Heart left ventricle (tissue), 16 donors: ENCODE measurements at regions of chr2 and their contacts with region 1.

Region 1: DNA sequence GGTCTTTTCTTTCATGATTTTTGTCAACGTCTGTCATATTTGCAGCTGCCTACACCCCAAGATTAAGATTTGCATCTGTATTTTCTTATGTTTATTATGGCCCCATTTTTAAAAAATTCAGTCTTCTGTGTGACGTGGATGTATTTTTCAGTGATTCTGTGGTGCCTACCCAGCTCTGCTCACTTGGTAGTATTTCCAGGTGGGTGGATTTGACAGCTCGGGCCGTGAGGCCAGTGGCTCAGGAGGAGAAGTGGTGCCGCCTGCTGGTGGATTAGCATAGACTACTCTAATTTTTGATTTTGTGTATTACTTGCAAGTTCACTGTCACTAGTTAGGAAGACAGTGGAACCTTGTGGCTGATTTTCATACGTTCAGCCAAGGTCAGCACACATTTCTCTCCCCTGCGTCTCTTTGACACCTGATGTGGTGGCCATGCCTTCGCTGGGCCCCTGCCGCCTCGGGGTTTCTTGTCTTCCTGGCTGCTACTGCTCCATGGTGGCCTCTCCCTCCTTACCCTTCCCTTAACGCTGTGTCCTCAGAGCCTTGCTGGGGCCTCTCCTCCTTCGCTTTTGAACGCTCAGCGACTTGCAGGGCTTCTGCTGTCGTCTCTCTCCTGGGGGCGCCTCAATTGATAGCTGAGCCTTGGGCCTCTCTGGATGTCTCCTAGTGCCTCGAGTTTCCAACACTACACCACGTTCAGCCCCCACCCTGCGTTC is 89.3 kb downstream of the DGKD start:
- DNase-seq: peak; percentile 74 to 85 (median 80)
- ATAC-seq: peak; percentile 33 to 70 (median 53)
- H3K4me3 ChIP-seq: no peak overlapping the region
- H3K27ac ChIP-seq: peak overlapping the region in 1 of 12 donors; percentile 30
- H3K4me1 ChIP-seq: peaks cover 0 to 33% (median 14%) of the 10 kb centered on the region in 12 donors
- H3K27me3 ChIP-seq: no peaks in the 10 kb centered on the region
- CTCF ChIP-seq: peak; percentile 66 to 92 (median 82)
- POLR2A ChIP-seq: no peak

Region 2: DNA sequence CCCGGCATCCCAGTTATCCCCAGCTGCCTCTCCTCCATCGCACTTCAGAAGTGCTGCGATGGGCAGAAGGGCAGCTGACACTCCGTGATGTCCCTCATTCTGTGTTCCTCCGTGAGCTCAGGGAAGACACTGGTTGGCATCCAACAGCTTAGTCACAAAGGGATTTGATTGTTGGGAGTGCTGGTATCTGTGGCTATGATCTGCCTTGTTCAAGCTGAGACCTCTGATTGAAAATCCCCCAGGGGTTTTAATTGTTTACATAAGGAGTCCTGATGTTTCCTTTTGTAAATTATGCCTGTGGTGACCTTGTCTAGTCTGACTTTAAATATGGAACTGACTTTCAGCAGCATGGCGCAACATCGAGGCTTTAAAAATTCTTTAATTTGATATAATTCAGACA is 154.9 kb before region 1 on chr2:
- intact Hi-C with region 1: loop called in 6 of 10 experiments (anchors 10 kb)
- DNase-seq: no peak
- ATAC-seq: no peak
- H3K4me3 ChIP-seq: no peak overlapping the region
- H3K27ac ChIP-seq: no peak overlapping the region
- H3K4me1 ChIP-seq: peaks cover 0 to 6% (median 0%) of the 10 kb centered on the region in 12 donors
- H3K27me3 ChIP-seq: no peaks in the 10 kb centered on the region
- CTCF ChIP-seq: no peak
- POLR2A ChIP-seq: no peak

Region 3: GRCh38 chr2:233353769-233354499 is 89.7 kb before region 1 on chr2 and contains the start of gene DGKD:
- intact Hi-C with region 1: loop called (anchors 1 to 5 kb)
- DNase-seq: peak; percentile 42 to 85 (median 66)
- ATAC-seq: peak; percentile 34 to 84 (median 73)
- H3K4me3 ChIP-seq: peak within 1 kb of the TSS; percentile 39 to 90 (median 70)
- H3K27ac ChIP-seq: peak within 1 kb of the TSS in 8 of 12 donors; percentile 39 to 81 (median 62)
- H3K4me1 ChIP-seq: peaks cover 0 to 79% (median 30%) of the 10 kb centered on the region in 12 donors
- H3K27me3 ChIP-seq: no peaks in the 10 kb centered on the region
- CTCF ChIP-seq: peak in 9 of 12 donors; percentile 12 to 76 (median 25)
- POLR2A ChIP-seq: no peak
- total RNA-seq, gene DGKD: 15.5 to 67.3 (median 42.8) TPM

Region 4: GRCh38 chr2:233404222-233404621 is 39.4 kb before region 1 on chr2:
- intact Hi-C with region 1: loop called (anchors 1 to 5 kb)
- DNase-seq: no peak
- ATAC-seq: peak in 3 of 4 donors; percentile 66 to 68 (median 66)
- H3K4me3 ChIP-seq: no peak overlapping the region
- H3K27ac ChIP-seq: no peak overlapping the region
- H3K4me1 ChIP-seq: peaks cover 0 to 15% (median 7%) of the 10 kb centered on the region in 12 donors
- H3K27me3 ChIP-seq: no peaks in the 10 kb centered on the region
- CTCF ChIP-seq: peak; percentile 53 to 75 (median 62)
- POLR2A ChIP-seq: no peak

Region 5: DNA sequence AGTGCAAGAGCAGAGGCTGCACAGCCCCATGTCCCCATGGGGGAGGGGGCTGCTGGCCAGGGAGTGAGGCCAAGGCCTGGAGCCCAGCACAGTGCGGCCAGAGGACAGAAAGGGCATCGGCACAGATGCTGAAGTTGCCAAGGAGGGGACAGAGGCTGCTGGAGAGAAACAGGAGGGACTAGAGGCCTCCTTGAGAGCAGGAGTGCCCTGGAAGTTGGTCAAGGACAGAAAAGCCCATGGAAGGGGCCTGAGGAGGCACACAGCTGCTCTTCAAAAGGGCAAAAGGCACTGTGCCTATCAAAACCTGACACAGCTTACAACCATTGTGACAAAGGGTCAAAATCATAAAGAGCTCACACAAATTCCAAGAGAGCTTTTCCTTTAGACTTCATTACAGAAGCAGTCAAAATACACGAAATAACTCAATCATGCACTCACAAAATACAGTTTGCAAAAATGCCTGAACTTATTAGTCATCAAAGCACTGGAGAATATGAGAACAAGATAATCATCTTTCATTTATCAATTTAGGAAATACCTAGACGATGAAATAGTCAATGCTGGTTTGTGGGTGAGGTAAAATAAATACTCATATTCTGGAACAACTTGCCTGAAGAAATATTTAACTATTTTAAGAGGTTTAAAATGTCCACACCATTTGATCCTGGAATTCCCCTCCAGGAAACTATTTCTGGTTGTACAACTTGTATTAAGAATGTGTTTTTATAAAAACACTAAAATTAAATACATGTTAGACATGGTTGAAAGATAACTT is 43.3 kb after region 1 on chr2:
- intact Hi-C with region 1: no loop called
- DNase-seq: peak in 1 of 5 donors; percentile 34
- ATAC-seq: peak; percentile 34 to 77 (median 56)
- H3K4me3 ChIP-seq: no peak overlapping the region
- H3K27ac ChIP-seq: peak overlapping the region in 5 of 12 donors; percentile 10 to 69 (median 44)
- H3K4me1 ChIP-seq: peaks cover 0 to 16% (median 9%) of the 10 kb centered on the region in 12 donors
- H3K27me3 ChIP-seq: no peaks in the 10 kb centered on the region
- CTCF ChIP-seq: no peak
- POLR2A ChIP-seq: no peak

Region 6: DNA sequence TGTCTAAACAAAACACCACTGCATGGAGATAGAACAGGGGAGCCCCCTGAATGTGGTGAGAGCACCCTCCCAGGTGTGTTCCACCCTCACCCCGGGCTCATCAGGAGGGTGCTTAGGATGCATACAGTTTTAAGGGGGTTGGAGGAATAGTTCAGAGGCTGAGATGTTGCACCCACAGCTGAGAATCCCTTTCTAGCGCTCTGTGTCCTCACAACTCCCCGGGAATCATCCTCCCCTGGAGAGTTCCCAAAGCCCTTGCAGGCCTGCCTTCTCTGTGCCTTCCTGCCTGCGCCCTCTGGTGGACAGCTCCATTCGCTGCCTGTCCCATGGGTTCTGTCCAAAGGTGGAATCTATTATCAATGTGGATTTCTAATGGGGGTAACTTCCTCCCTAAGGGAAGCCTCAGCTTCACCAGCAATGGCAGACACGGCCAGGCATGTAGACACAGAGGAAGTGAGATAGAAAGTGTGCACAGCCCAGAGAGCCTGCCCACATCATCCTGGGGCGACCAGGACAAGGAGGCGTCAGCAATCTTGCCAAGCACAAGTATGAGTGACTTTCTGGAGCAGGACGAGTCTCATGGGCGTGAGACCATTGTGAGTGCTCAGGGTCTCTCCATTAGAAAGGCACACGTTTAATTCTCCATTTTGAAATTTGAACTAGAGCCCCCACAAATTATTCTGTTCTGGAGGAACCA is 267.8 kb after region 1 on chr2:
- intact Hi-C with region 1: loop called in 1 of 10 experiments (anchors 10 kb)
- DNase-seq: peak; percentile 47 to 79 (median 61)
- ATAC-seq: peak in 3 of 4 donors; percentile 75 to 85 (median 76)
- H3K4me3 ChIP-seq: no peak overlapping the region
- H3K27ac ChIP-seq: no peak overlapping the region
- H3K4me1 ChIP-seq: no peaks in the 10 kb centered on the region
- H3K27me3 ChIP-seq: peaks cover 0 to 16% (median 4%) of the 10 kb centered on the region in 9 donors
- CTCF ChIP-seq: peak; percentile 48 to 83 (median 71)
- POLR2A ChIP-seq: no peak